ENCODE measurements at regions of chr1 and their contacts with region 1.

Region 1: DNA sequence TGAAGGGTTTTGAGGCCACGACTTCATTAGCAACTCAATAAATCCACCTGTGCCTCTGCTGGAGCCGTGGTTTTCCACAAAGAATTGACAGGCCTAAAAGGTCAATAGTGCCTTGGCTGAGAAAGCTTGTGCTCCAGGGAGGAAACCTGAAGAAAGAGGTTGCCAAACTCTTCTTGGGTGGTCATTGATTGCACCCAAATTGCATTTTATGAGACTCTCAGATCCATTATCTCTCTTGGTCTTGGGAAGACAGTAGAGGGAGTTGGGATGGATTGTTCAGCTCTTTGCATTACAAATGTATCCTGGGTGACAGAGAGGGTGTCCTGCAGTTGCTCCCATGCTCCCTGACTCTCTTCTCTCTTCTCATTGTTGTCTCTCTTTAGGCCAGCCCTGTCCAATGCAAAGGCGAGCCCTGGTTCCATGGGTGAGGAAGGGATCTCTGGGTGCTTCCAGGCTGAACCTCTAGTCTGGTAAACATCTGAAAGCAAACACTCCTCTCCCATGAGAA is 46.1 kb upstream of the HTR1D start:
- DNase-seq: no peak
- ATAC-seq: no peak
- H3K4me3 ChIP-seq: no peak overlapping the region
- H3K27ac ChIP-seq: no peak overlapping the region
- H3K4me1 ChIP-seq: no peaks in the 10 kb centered on the region
- H3K27me3 ChIP-seq: peaks cover 6% of the 10 kb centered on the region
- CTCF ChIP-seq: no peak
- POLR2A ChIP-seq: no peak
- RAD21 ChIP-seq: no peak

Region 2: GRCh38 chr1:22876359-22877111 is 386.9 kb before region 1 on chr1:
- CTCF ChIA-PET with region 1: no interaction called
- POLR2A ChIA-PET with region 1: no interaction called
- dilution Hi-C with region 1: no loop called
- in situ Hi-C with region 1: no loop called
- intact Hi-C with region 1: no loop called
- DNase-seq: peak; percentile 63
- ATAC-seq: no peak; the same call in none of the 2 replicates
- H3K4me3 ChIP-seq: no peak overlapping the region
- H3K27ac ChIP-seq: no peak overlapping the region
- H3K4me1 ChIP-seq: peaks cover 5% of the 10 kb centered on the region
- H3K27me3 ChIP-seq: no peaks in the 10 kb centered on the region
- CTCF ChIP-seq: no peak
- POLR2A ChIP-seq: no peak
- RAD21 ChIP-seq: no peak

Region 3: GRCh38 chr1:23224714-23225648 is 38.5 kb before region 1 on chr1:
- CTCF ChIA-PET with region 1: no interaction called
- POLR2A ChIA-PET with region 1: no interaction called
- dilution Hi-C with region 1: no loop called
- in situ Hi-C with region 1: no loop called
- intact Hi-C with region 1: loop called (anchors 5 kb)
- DNase-seq: peak; percentile 64
- ATAC-seq: peak; percentile 87
- H3K4me3 ChIP-seq: no peak overlapping the region
- H3K27ac ChIP-seq: no peak overlapping the region
- H3K4me1 ChIP-seq: peaks cover 2% of the 10 kb centered on the region; the same call in 1 of the 2 replicates
- H3K27me3 ChIP-seq: peaks cover 16% of the 10 kb centered on the region
- CTCF ChIP-seq: no peak
- POLR2A ChIP-seq: no peak
- RAD21 ChIP-seq: no peak

Measured in IMR-90 (cell line).